Activated CD8-positive, alpha-beta memory T cell treated with anti-CD3 and anti-CD28 coated beads, Interleukin-2, amount 10 ng/mL, durations not matched to agents 7 days and 5 days (primary cell): ENCODE measurements at regions of chr17 and their contacts with region 1.

Region 1: GRCh38 chr17:29369831-29370735 is 20.1 kb upstream of the TAOK1 start:
- DNase-seq: peak; percentile 65
- ATAC-seq: peak; percentile 93
- H3K4me3 Mint-ChIP-seq: no peak overlapping the region
- H3K27ac Mint-ChIP-seq: no peak overlapping the region
- H3K4me1 Mint-ChIP-seq: no peaks in the 10 kb centered on the region
- H3K27me3 Mint-ChIP-seq: no peaks in the 10 kb centered on the region

Region 2: GRCh38 chr17:29357821-29358232 is 12.3 kb before region 1 on chr17:
- CTCF ChIA-PET with region 1: interaction called, 14 read pairs
- DNase-seq: no peak
- ATAC-seq: peak; percentile 39
- H3K4me3 Mint-ChIP-seq: no peak overlapping the region
- H3K27ac Mint-ChIP-seq: no peak overlapping the region
- H3K4me1 Mint-ChIP-seq: peaks cover 7% of the 10 kb centered on the region
- H3K27me3 Mint-ChIP-seq: no peaks in the 10 kb centered on the region

Region 3: DNA sequence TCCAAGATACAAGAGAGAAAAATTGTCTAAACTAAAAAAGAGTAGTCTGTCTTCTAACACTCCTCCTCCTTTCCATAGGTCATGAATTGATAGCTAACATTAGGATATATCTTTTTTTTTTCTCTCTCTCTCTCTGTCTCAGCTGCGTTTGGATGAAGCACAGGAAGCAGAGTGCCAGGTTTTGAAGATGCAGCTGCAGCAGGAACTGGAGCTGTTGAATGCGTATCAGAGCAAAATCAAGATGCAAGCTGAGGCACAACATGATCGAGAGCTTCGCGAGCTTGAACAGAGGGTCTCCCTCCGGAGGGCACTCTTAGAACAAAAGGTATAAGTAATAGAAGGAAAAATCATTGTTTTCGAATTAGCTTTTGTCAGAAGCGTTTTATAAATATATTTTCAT is 163.9 kb after region 1 on chr17:
- CTCF ChIA-PET with region 1: interaction called, 75 read pairs
- DNase-seq: no peak
- ATAC-seq: no peak
- H3K4me3 Mint-ChIP-seq: no peak overlapping the region
- H3K27ac Mint-ChIP-seq: no peak overlapping the region
- H3K4me1 Mint-ChIP-seq: no peaks in the 10 kb centered on the region
- H3K27me3 Mint-ChIP-seq: no peaks in the 10 kb centered on the region

Region 4: DNA sequence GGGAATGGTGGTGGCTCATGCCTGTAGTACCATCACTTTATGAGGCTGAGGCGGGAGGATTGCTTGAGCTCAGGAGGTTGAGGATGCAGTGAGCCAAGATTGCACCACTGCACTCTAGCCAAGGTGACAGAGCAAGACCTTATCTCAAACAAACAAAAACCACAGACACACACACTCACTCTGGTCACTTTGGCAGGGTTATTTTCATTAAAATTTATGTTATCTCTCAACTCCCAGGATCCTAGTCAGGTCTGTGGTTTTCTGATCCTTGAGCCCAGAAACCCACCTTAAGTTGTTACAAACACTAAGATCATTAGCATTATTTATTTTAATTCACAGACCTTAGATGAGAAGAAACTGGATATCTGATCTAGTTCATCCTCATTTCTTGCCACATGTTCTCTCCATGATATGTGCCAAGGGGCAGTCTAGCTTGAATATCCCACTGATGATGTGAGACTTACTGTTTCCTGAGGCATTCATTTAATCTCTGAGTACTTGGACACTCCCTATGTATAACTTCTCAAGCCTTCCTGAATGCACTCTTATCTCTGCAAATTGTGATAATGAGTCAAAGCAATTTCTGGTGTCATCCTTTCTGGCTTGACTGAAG is 187.1 kb after region 1 on chr17:
- CTCF ChIA-PET with region 1: interaction called, 11 read pairs
- DNase-seq: no peak
- ATAC-seq: peak; percentile 34
- H3K4me3 Mint-ChIP-seq: no peak overlapping the region
- H3K27ac Mint-ChIP-seq: peak overlapping the region; percentile 52
- H3K4me1 Mint-ChIP-seq: peaks cover 38% of the 10 kb centered on the region
- H3K27me3 Mint-ChIP-seq: no peaks in the 10 kb centered on the region

Region 5: GRCh38 chr17:29589524-29590410 is 219.7 kb after region 1 on chr17 and contains the start of gene GIT1:
- CTCF ChIA-PET with region 1: interaction called, 25 read pairs
- DNase-seq: peak; percentile 87
- ATAC-seq: peak; percentile 75
- H3K4me3 Mint-ChIP-seq: peak within 1 kb of the TSS; percentile 87
- H3K27ac Mint-ChIP-seq: peak within 1 kb of the TSS; percentile 88
- H3K4me1 Mint-ChIP-seq: peaks cover 75% of the 10 kb centered on the region
- H3K27me3 Mint-ChIP-seq: no peaks in the 10 kb centered on the region
- total RNA-seq, gene GIT1: 69.5 to 79.5 TPM